PC-9 (cell line): ENCODE measurements at regions of chr20 and their contacts with region 1.

Region 1: GRCh38 chr20:48538420-48539203 is 289.2 kb downstream of the PREX1 start:
- DNase-seq: peak; percentile 94 to 99
- H3K4me3 ChIP-seq: peak overlapping the region; percentile 7; the same call in 1 of the 2 replicates
- H3K27ac ChIP-seq: peak overlapping the region; percentile 84
- H3K4me1 ChIP-seq: peaks cover 47% of the 10 kb centered on the region
- H3K27me3 ChIP-seq: no peaks in the 10 kb centered on the region
- CTCF ChIP-seq: no peak

Region 2: DNA sequence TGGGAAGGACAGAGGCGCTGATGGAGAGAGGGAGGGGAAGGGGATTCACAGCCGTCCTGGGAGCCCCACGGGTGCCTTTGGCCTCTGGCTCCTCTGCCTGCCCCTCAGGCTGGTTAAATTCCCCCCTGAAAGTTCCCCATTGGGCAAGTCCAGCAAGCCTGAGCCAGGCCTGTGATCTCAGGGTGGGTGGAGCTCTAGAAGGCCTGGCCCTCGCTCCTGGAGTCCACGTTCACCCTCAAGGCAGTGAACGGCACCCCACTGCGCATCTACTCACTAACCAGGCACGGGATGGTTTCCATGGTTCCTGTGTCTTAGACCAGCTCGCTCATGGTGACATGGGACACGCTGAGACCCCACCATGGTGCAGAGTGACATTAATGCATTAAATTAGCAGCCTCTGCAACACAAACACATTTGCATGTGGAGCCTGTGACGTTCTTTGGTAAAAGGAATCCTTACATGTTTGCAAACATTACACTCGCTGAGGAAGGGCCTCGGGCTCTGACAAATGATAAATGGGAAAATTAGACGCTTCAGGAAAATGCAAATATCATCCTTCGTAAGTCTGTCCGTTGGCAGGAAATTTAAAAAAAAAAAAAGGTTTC is 163.5 kb before region 1 on chr20:
- CTCF ChIA-PET with region 1: no interaction called
- POLR2A ChIA-PET with region 1: interaction called, 7 read pairs
- intact Hi-C with region 1: loop called (anchors 1 kb)
- DNase-seq: peak in 1 of 2 experiments; percentile 60
- H3K4me3 ChIP-seq: peak overlapping the region; percentile 57; the same call in 1 of the 2 replicates
- H3K27ac ChIP-seq: peak overlapping the region; percentile 99
- H3K4me1 ChIP-seq: peaks cover 45% of the 10 kb centered on the region
- H3K27me3 ChIP-seq: no peaks in the 10 kb centered on the region
- CTCF ChIP-seq: no peak